GM13977 (cell line): ENCODE measurements at regions of chr12 and their contacts with region 1.

Region 1: GRCh38 chr12:15910864-15911721 is at the start of gene DERA:
- DNase-seq: peak; percentile 74
- CTCF ChIP-seq: no peak

Region 2: GRCh38 chr12:16359512-16360491 is 448.7 kb after region 1 on chr12:
- in situ Hi-C with region 1: loop called (anchors 25 kb)
- DNase-seq: no peak
- CTCF ChIP-seq: peak; percentile 54